ENCODE measurements at regions of chr16 and their contacts with region 1.

Region 1: DNA sequence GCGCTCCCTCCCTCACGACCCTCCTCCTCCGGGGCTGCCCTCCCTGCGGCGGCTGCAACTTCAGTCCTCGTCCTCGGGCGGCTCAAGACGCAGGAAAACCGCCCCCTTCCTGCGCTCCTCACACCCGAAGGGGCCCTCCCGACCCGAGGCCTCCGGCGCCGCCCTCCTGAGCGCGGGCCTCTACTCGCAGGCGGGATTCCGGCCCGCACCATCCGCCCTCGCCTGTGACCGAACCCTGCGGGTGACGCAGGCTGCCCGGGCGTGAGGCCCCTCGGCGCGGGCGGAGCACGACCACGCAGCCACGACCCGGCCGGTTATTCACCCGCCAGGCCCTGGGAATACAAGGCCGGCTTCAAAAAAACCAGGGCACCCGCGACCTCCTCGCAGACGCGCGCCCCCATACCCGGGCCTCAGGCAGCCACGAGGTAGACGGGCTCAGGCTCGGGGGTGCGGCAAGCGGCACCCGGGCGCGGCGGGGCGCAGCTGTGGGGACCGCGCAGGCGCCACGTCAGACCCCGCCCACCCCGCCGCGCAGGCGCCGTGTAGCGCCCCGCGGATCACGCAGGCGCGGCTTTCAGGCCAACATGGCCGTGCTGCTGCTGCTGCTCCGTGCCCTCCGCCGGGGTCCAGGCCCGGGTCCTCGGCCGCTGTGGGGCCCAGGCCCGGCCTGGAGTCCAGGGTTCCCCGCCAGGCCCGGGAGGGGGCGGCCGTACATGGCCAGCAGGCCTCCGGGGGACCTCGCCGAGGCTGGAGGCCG is at the start of gene SPG7:
- DNase-seq: peak; percentile 82
- H3K4me3 ChIP-seq: peak within 1 kb of the TSS; percentile 53 to 96 (median 65)
- H3K27ac ChIP-seq: peak within 1 kb of the TSS; percentile 65
- H3K4me1 ChIP-seq: peaks cover 29% of the 10 kb centered on the region
- H3K27me3 ChIP-seq: no peaks in the 10 kb centered on the region
- CTCF ChIP-seq: no peak
- total RNA-seq, gene SPG7: 91.9 to 102 TPM

Region 2: GRCh38 chr16:89171463-89172170 is 336.4 kb before region 1 on chr16 and contains the start of gene CDH15:
- CTCF ChIA-PET with region 1: no interaction called
- dilution Hi-C with region 1: no loop called
- in situ Hi-C with region 1: no loop called
- intact Hi-C with region 1: loop called (anchors 2 kb)
- DNase-seq: peak; percentile 92
- H3K4me3 ChIP-seq: peak within 1 kb of the TSS in 2 of 3 experiments; percentile 23 to 42
- H3K27ac ChIP-seq: no peak within 1 kb of the TSS
- H3K4me1 ChIP-seq: peaks cover 26% of the 10 kb centered on the region
- H3K27me3 ChIP-seq: no peaks in the 10 kb centered on the region
- CTCF ChIP-seq: no peak
- total RNA-seq, gene CDH15: 0.14 to 0.33 TPM

Region 3: DNA sequence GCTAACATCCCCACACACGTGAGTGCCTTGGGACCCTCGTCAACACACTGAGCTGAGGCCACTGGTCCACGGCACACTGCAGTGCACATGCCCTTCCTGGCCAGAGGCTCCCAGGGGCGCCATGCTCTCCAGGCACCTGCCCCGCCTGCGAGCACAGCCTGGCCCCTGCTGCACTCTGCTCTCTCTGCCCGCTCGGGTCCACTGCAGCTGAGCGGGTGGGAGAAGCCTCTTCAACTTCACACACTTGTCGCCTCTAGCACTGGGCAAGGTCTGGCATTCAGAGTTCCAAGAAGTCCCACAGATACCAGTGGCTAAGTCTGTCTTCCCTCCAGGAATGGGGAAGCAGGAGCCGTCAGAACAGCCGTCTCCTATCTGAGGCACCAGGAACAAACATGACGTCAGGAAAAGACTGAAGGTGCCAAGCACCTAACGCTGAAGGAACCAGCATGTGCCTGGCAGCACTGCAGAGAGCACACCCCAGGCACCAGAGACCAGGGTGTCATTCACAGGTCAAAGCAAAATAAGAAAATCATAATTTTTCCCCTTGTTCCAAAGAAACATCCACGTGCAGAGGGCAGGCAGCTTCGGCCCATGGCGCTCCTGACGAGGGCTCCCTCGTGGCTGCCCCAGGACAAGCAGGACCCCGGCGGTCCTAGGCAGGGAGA is 207.6 kb before region 1 on chr16:
- CTCF ChIA-PET with region 1: no interaction called
- dilution Hi-C with region 1: no loop called
- in situ Hi-C with region 1: no loop called
- intact Hi-C with region 1: loop called (anchors 2 kb)
- DNase-seq: no peak
- H3K4me3 ChIP-seq: no peak overlapping the region
- H3K27ac ChIP-seq: no peak overlapping the region
- H3K4me1 ChIP-seq: peaks cover 17% of the 10 kb centered on the region
- H3K27me3 ChIP-seq: no peaks in the 10 kb centered on the region
- CTCF ChIP-seq: no peak

Region 4: DNA sequence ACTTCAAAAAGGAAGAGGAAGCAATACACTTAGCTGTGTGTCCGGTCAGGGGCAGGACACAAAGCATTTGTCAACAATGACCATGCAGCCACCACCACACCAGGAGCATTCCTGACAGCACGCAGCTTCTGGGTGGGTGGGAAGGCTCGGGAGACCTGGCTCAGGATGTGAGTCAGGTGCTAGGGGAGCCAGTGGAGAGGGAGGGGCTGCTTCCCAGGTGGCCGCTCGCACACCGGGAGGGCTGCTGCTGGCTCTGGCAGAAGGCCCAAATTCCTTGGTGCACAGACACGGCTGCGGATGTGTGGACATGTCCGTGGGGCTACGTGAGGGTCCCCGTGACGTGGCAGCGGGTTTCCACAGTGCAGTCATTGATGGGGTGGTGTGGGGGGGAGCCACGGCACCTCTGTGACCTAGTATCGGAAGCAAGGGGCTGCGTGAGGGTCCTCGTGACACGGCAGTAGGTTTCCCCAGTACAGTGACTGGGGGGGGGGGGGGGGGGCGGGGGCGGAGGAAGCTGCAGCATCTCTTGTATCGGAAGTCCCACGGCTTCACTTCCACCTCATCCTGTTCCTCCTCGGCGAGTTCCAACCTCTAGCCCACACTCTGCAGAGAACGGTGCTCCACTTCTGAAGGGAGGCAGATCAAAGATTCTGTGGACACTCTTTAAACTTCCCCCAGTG is 177.7 kb before region 1 on chr16:
- CTCF ChIA-PET with region 1: no interaction called
- dilution Hi-C with region 1: no loop called
- in situ Hi-C with region 1: no loop called
- intact Hi-C with region 1: loop called (anchors 1 kb)
- DNase-seq: peak; percentile 79
- H3K4me3 ChIP-seq: no peak overlapping the region
- H3K27ac ChIP-seq: peak overlapping the region; percentile 25
- H3K4me1 ChIP-seq: peaks cover 67% of the 10 kb centered on the region
- H3K27me3 ChIP-seq: no peaks in the 10 kb centered on the region
- CTCF ChIP-seq: no peak

Region 5: GRCh38 chr16:89401641-89402445 is 106.2 kb before region 1 on chr16:
- CTCF ChIA-PET with region 1: no interaction called
- dilution Hi-C with region 1: loop called (anchors 5 kb)
- in situ Hi-C with region 1: no loop called
- intact Hi-C with region 1: loop called (anchors 5 kb)
- DNase-seq: no peak
- H3K4me3 ChIP-seq: no peak overlapping the region
- H3K27ac ChIP-seq: no peak overlapping the region
- H3K4me1 ChIP-seq: peaks cover 13% of the 10 kb centered on the region
- H3K27me3 ChIP-seq: no peaks in the 10 kb centered on the region
- CTCF ChIP-seq: no peak

Region 6: GRCh38 chr16:89466920-89467319 is 41.1 kb before region 1 on chr16:
- CTCF ChIA-PET with region 1: no interaction called
- dilution Hi-C with region 1: no loop called
- in situ Hi-C with region 1: no loop called
- intact Hi-C with region 1: no loop called
- DNase-seq: no peak
- H3K4me3 ChIP-seq: no peak overlapping the region
- H3K27ac ChIP-seq: no peak overlapping the region
- H3K4me1 ChIP-seq: peaks cover 11% of the 10 kb centered on the region
- H3K27me3 ChIP-seq: no peaks in the 10 kb centered on the region
- CTCF ChIP-seq: no peak

Region 7: GRCh38 chr16:89490387-89491237 is 17.4 kb before region 1 on chr16 and contains the start of gene ANKRD11:
- CTCF ChIA-PET with region 1: no interaction called
- dilution Hi-C with region 1: no loop called
- in situ Hi-C with region 1: no loop called
- intact Hi-C with region 1: loop called (anchors 2 kb)
- DNase-seq: peak; percentile 100
- H3K4me3 ChIP-seq: peak within 1 kb of the TSS; percentile 83 to 89 (median 89)
- H3K27ac ChIP-seq: peak within 1 kb of the TSS; percentile 78
- H3K4me1 ChIP-seq: peaks cover 22% of the 10 kb centered on the region
- H3K27me3 ChIP-seq: no peaks in the 10 kb centered on the region
- CTCF ChIP-seq: no peak
- total RNA-seq, gene ANKRD11: 97.4 to 224 TPM

Region 8: DNA sequence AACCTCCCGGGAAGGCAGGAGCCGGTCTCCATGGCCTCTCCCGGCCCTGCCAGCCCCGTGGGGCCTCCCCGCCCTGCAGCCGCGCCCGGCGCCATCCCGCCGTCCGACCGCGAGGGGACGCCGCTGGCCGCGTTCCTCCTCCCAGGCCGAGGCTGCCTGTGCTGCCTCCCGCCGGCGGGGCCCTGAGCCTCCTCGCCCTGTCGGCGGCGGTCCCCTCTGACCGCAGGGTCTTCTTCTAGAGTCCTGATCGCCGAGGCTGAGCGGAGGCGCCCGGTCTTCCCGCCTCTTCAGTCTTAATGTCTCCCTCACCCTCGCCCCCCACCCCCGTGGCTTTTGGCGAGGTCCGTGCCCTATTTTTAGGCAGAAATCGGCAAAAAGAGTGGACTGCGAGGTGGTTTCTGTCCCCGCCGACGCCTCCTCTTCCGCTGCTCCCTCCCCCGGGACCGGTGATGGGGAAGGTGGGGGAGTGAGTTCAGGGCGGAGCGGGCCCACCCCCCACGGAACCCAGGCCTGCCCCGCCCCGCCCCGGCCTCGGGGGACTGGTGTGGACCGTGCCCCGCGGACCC is 66.8 kb after region 1 on chr16:
- CTCF ChIA-PET with region 1: no interaction called
- dilution Hi-C with region 1: no loop called
- in situ Hi-C with region 1: no loop called
- intact Hi-C with region 1: no loop called
- DNase-seq: peak; percentile 41
- H3K4me3 ChIP-seq: peak overlapping the region in 2 of 3 experiments; percentile 28 to 29
- H3K27ac ChIP-seq: no peak overlapping the region
- H3K4me1 ChIP-seq: peaks cover 15% of the 10 kb centered on the region
- H3K27me3 ChIP-seq: peaks cover 7% of the 10 kb centered on the region
- CTCF ChIP-seq: peak; percentile 64 to 67

Measured in mammary epithelial cell (primary cell).